ENCODE measurements at regions of chr10 and their contacts with region 1.

Region 1: DNA sequence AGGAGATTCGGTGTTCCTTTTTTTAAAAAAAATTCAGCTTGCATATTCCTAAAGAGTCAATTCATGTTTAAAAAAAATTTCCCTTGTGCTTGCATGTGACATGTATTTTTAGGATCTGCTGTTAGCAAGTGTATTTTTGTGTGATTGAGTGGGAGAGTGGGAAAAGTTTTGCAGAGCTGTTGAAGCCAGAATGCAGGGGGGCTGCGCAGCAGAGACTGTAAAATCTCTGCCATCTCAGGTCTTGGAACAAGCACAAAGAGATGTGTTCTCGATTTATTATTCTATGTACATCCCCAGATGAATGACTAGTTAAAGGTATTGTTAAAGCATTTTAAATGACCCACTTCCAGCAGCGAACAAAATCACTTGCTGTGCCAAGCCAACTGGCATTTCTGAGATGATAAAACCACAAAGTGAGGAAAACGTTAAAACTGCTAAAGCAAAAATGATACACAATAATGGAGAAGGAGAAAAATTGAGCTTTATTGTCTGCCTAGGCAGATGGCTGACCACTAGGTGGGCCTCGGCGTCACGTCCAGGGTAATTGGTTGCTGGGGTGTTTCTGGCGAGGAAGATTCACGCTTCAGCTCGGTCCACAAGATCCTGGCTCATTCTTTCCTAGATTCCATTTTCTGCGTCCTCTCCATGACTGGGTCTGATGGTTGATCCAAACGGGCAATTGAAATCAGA is 67.0 kb upstream of the ATRNL1 start:
- DNase-seq: no peak
- ATAC-seq: no peak

Region 2: GRCh38 chr10:114163062-114163461 is 863.1 kb before region 1 on chr10:
- intact Hi-C with region 1: loop called (anchors 5 kb)
- DNase-seq: no peak
- ATAC-seq: no peak

Region 3: GRCh38 chr10:115001506-115002381 is 24.5 kb before region 1 on chr10:
- intact Hi-C with region 1: no loop called
- DNase-seq: no peak
- ATAC-seq: peak; percentile 41

Region 4: DNA sequence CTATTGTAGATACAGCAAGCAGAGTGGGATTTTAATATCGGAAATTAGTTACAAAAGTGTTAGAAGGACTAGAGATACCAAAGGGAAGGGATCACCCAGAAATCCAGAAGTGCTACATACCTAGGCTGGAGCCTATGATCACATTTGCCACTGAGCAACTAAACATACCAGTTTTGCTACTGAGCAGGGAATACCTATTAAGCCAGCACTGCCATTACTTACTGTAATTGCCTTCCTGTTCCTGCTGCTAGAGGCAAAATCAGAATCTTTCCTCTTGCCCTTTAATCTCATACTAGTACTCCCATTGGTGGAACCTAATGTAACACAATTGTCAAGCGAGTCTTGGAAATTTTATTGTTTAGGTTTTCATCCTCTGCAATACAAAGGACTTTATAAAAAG is 188.6 kb after region 1 on chr10:
- intact Hi-C with region 1: no loop called
- DNase-seq: no peak
- ATAC-seq: no peak

Measured in sciatic nerve (tissue), 2 donors.